AG04449 (cell line): ENCODE measurements at regions of chr11 and their contacts with region 1.

Region 1: DNA sequence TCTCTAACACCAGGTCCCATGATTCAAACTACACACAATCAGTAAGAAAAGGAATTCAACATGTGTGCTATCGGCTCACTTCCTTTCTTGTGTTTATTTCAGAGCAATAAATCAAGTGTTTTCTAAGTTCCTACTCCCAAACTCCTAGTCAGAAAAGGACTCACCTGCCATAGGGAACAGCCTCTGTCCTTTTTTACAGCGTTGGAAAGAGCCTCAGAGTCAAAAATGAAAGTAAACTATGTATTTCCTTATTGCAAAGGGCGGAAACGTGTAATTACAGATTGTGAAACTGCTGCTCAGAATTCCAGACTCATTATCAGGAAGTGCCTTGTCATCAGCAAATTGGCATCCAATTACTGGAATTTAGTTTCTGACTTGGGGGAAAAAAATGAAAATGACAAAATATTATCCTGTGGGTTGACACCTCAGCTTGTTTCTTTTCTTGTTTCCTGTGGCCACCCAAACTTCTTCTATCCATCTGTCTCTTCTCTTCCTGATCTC is at the start of gene CASP4:
- DNase-seq: peak; percentile 45
- H3K4me3 ChIP-seq: peak within 1 kb of the TSS; percentile 51
- CTCF ChIP-seq: no peak

Region 2: DNA sequence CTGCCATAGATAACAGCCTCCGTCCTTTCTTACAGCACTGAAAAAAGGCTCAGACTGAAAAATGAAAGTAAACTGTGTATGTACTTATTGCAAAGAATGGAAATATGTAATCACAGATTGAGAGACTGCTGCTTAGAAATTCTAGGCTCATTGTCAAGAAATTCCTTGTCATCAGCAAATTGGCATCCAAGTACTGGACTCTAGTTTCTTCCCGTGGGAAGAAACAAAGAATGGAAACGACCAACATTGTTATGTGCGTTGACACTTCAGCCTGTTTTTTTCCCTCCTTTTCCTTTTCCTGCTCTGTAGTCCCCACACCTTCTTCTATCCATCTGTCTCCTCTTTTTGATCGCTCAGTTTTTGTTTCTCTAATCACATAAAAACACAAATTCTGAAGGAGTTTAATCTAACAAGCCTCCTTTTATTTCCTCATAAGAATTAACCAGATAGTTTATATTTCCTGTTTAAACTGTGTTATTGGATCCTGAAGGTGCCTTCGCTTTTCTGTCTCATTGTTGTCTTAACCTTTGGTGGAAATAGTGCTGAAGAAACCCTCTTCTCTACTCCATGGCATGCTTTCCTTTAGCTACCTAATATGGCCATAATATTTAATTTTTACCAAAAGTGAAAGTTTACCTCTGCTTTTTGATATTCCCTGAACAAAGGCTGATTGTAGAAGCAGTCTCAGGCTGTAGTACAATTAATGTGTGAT is 50.1 kb before region 1 on chr11:
- CTCF ChIA-PET with region 1: no interaction called
- POLR2A ChIA-PET with region 1: no interaction called
- DNase-seq: peak; percentile 58
- H3K4me3 ChIP-seq: peak overlapping the region; percentile 50
- CTCF ChIP-seq: no peak

Region 3: DNA sequence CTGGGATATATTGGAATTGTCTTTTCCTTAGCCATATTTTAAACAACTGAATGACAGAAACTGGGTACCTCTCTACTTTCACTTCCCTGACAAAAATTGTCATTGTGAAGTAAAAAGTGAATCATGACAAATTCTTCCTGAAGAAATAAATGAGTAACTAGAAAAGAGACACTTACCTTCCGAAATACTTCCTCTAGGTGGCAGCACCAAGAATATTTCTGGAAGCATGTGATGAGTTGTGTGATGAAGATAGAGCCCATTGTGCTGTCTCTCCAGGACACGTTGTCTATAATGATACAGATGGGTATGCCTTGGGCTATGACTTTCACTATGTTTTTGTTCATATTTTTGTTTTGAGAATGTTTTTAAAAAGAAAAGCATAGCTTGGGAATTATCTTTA is 21.5 kb before region 1 on chr11:
- CTCF ChIA-PET with region 1: interaction called, 19 read pairs
- POLR2A ChIA-PET with region 1: no interaction called
- DNase-seq: no peak
- H3K4me3 ChIP-seq: no peak overlapping the region
- CTCF ChIP-seq: peak; percentile 41